Transverse colon (tissue), 4 donors: ENCODE measurements at regions of chr2 and their contacts with region 1.

Region 1: GRCh38 chr2:130797493-130798435 is 39.0 kb upstream of the ARHGEF4 start:
- DNase-seq: peak; percentile 91
- H3K4me3 ChIP-seq: peak overlapping the region; percentile 52 to 78 (median 68)
- H3K27ac ChIP-seq: peak overlapping the region; percentile 90 to 95 (median 92)
- H3K4me1 ChIP-seq: peaks cover 0 to 14% (median 7%) of the 10 kb centered on the region in 4 donors
- H3K27me3 ChIP-seq: no peaks in the 10 kb centered on the region
- CTCF ChIP-seq: peak; percentile 80 to 91 (median 84)
- EP300 ChIP-seq: no peak
- POLR2A ChIP-seq: peak; percentile 41

Region 2: DNA sequence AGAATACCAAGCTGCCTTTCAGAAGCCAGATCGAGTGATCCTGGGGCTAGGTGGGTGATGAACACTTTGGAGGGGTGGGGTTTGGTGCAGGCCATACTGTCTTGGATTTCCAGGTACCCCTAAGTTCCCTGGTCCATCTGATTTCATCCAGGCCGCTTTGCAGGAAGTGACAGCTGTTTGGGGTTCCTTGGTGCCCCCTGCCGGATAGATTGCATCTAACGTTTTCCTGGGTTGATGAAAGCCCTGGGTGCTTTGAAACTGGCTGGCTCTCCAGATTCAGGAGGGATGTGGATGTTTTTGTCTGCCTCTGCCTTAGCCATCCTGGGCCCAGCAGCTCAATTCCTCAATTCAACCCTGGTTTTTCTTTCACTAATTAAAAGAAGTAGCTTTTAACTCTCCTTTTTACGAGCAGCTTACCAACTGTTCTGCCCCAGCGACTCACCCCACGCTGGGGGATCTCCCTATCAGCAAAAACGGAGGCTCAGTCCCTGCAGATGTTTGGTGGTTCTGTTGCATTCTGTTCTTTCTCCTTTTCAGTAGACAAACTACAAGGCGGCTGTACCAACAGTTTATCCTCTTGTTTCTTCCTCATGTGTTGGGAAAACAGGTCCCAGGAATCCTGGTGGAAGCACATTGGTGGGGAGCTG is 76.1 kb after region 1 on chr2:
- in situ Hi-C with region 1: loop called (anchors 10 kb)
- intact Hi-C with region 1: loop called (anchors 2 kb)
- DNase-seq: peak; percentile 79
- H3K4me3 ChIP-seq: no peak overlapping the region
- H3K27ac ChIP-seq: no peak overlapping the region
- H3K4me1 ChIP-seq: peaks cover 0 to under 1% (median 0%) of the 10 kb centered on the region in 4 donors
- H3K27me3 ChIP-seq: no peaks in the 10 kb centered on the region
- CTCF ChIP-seq: peak; percentile 58 to 69 (median 68)
- EP300 ChIP-seq: no peak
- POLR2A ChIP-seq: no peak

Region 3: DNA sequence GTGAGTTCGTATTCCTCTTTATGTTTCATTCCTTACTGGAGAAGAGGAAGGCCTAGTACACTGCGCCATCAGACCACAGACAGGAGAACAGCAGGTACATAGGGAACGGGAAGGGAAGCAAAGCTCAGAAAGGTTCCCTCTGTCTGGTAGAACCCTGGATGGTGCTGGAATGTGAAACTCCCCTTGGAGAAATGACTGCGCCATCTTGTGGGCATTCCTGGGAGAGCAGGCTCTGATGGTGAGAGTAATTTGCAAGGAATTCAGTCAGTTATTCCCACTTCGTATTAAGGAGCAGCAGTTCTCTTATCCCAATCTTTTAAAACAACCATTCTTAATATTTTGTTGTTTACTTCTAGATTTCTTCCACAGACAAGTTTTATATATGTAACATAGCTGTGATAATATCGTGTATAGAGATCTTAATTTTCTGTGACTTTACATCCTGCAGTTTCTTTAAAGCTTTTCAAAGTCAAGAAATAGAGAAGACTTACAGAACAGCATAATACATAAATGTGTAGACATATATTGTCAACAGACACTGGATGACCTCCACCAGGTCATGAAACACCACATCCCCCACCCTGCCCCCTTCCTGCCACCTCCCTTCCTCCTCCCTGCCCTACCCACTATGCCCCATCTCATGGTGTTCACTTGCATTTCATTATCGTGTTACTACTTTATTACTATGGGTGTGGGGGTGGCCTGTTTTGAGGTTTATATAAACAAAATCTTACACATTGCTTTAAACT is 122.8 kb after region 1 on chr2:
- in situ Hi-C with region 1: no loop called
- intact Hi-C with region 1: loop called (anchors 5 kb)
- DNase-seq: peak; percentile 72
- H3K4me3 ChIP-seq: no peak overlapping the region
- H3K27ac ChIP-seq: no peak overlapping the region
- H3K4me1 ChIP-seq: no peaks in the 10 kb centered on the region
- H3K27me3 ChIP-seq: peaks cover 13% of the 10 kb centered on the region
- CTCF ChIP-seq: peak; percentile 72 to 84 (median 76)
- EP300 ChIP-seq: no peak
- POLR2A ChIP-seq: no peak

Region 4: DNA sequence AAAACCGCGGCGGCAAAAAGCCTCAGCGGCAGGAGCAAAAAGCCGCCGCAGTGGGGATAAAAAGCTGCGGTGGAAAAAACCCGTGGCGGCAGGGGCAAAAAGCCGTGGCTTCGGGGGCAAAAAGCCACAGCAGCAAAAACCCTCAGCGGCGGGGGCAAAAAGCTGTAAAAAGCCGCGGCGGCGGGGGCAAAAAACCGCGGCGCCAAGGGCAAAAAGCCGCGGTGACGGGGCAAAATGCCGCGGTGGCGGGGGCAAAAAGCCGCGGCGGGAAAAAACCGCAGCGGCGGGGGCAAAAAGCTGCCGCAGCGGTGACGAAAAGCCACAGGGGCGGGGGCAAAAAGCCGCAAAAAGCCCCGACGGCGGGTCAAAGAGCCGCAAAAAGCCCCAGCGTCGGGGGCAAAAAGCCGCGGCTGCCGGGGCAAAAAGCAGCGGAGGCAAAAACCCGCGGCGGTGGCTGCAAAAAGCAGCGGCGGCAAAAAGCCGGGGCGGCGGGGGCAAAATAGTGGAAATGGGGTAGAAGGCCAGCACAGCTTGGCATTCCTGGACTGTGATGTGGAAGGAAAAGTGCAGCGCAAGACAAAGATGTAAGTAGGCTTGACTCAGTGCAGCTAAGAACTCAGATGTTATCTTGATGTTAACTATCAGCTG is 1212.2 kb after region 1 on chr2:
- in situ Hi-C with region 1: no loop called
- intact Hi-C with region 1: no loop called
- DNase-seq: no peak
- H3K4me3 ChIP-seq: peak overlapping the region in 3 of 4 donors; percentile 16 to 40 (median 22)
- H3K27ac ChIP-seq: no peak overlapping the region
- H3K4me1 ChIP-seq: peaks cover 0 to 6% (median 3%) of the 10 kb centered on the region in 4 donors
- H3K27me3 ChIP-seq: peaks cover 24% of the 10 kb centered on the region
- CTCF ChIP-seq: no peak
- EP300 ChIP-seq: no peak
- POLR2A ChIP-seq: no peak